Tibial artery (tissue), 4 donors: ENCODE measurements at regions of chr17 and their contacts with region 1.

Region 1: GRCh38 chr17:40075942-40076498 is 13.3 kb downstream of the THRA start:
- DNase-seq: no peak
- H3K4me3 ChIP-seq: peak overlapping the region; percentile 14 to 29
- H3K27ac ChIP-seq: peak overlapping the region; percentile 93 to 94
- H3K4me1 ChIP-seq: peaks cover 9 to 73% (median 65%) of the 10 kb centered on the region in 4 donors
- H3K27me3 ChIP-seq: no peaks in the 10 kb centered on the region
- CTCF ChIP-seq: no peak

Region 2: GRCh38 chr17:40090237-40091119 is 14.5 kb after region 1 on chr17:
- intact Hi-C with region 1: loop called (anchors 1 kb)
- DNase-seq: peak in 1 of 2 donors; percentile 28
- H3K4me3 ChIP-seq: no peak overlapping the region
- H3K27ac ChIP-seq: peak overlapping the region; percentile 94 to 98
- H3K4me1 ChIP-seq: peaks cover 0 to 70% (median 50%) of the 10 kb centered on the region in 4 donors
- H3K27me3 ChIP-seq: no peaks in the 10 kb centered on the region
- CTCF ChIP-seq: no peak